ENCODE measurements at regions of chr1 and their contacts with region 1.

Region 1: DNA sequence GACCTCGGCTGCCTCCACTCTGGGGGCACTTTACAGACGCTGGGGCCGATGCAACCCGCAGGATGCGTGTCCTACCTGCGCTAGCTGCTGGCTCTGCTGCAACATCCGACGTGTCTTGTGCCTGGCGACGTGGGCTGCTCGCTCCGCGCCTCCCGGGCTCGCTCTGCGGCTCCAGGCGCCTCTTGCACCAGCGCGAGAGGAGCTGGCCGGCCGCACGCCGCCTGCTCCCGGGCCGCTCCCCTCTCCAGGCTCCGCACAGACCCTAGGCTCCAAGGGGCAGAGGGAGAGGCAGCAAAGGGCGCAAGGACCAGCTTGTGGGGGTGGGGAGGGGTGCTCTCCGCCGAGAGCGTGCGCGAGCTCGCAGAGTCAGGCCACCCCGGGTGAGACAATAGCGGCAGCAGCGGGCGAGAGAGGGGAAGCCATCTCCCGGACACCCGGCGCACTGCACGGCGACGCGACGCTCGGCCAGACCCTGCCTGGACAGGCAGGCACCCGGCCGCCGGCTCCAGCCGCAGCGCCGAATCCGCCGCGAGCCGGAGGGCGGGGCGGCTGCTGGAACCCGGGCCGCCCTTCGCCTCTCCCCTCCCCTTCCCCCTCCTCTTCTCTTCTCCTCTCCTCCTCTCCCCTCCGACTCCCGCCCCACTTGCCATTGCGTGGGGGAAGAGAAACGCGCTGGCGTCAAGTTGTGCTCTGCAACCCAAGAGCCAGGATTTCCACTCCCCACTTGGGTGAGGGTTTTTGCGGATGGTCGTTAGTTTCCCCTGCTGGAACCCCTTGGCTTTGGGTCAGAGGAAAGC is at the start of gene PIK3C2B:
- DNase-seq: peak; percentile 88 to 89
- H3K4me3 ChIP-seq: peak within 1 kb of the TSS; percentile 43 to 70 (median 53)
- H3K27ac ChIP-seq: peak within 1 kb of the TSS; percentile 93 to 97 (median 97)
- H3K4me1 ChIP-seq: peaks cover 28 to 30% of the 10 kb centered on the region in 2 donors
- H3K27me3 ChIP-seq: no peaks in the 10 kb centered on the region
- CTCF ChIP-seq: peak in 5 of 6 experiments; percentile 19 to 66 (median 61)
- POLR2A ChIP-seq: peak; percentile 11 to 90
- total RNA-seq, gene PIK3C2B: 19.9 to 36.9 (median 27.2) TPM

Region 2: GRCh38 chr1:204461331-204462228 is 32.9 kb before region 1 on chr1:
- intact Hi-C with region 1: loop called (anchors 5 kb)
- DNase-seq: no peak
- H3K4me3 ChIP-seq: no peak overlapping the region
- H3K27ac ChIP-seq: peak overlapping the region in 2 of 3 donors; percentile 28 to 48
- H3K4me1 ChIP-seq: peaks cover 22 to 50% of the 10 kb centered on the region in 2 donors
- H3K27me3 ChIP-seq: no peaks in the 10 kb centered on the region
- CTCF ChIP-seq: no peak
- POLR2A ChIP-seq: no peak

Measured in thyroid gland (tissue), 4 donors.